Right ventricle myocardium superior (tissue), 1 donor: ENCODE measurements at regions of chr6 and their contacts with region 1.

Region 1: DNA sequence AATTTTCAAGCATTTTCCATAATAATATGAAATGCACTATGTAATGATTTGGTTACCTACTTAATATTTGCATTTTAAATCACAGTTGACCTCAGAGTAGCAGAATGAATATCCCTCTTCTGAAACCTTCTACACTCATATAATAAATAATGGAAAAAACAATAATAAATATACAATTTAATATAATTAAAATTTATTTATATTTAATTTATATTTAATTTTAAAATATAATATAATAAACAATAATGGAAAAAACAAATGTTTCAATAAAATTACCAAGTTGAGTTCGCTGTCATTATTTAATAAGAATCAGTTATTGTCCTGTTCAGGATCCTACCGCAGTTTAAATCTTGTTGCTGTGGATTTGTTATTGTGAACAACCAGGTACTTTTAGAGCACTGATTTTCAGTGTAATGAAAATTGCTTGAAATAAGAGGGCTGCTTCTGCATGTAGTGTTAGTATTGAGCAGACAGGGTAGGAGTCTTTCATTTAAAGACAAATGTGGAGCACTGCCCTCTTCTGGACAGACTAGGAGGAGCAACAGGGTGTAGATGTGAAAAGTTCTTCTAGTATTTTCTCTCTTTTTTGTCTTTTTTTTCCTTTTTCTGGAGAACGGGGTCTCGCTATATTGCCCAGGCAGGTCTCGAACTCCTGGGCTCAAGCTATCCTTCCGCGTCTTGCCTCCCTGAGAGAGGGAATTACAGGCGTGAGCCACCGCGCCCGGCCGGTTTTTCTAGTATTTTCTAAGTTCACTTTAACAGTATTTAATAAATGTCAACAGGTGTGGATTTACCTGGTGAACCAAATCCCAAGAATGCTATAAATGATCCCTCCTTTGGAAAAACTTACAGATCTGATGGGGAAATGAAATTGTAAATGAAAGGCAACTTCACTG is 13.6 kb downstream of the TRAPPC3L start:
- DNase-seq: peak; percentile 37
- ATAC-seq: peak; percentile 89

Region 2: DNA sequence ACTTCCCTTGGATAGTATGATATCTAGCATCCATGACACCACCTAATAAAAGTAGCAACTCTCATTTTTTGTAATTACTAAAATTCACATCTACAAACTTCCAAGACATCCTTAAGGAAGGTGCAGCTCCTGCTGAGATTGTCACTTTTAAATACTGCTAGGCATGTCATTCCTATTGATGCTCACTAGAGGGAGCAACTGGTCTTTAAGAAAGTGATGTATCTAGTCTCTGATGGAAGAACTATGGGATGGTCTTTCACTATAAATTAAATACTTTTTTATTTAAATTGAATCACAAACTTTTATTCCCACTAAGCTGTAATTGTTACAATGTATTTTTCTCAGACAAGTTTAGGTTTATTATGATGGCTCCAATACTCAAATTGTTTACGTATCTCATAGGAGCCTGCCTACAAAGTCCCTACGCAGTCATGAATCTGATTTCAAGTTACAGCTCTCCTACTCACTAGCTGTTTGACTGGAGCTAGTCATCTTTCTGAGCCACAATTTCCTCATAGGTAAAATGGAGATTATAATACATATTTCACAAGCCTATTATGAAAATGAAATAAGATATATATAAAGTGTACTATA is 244.1 kb before region 1 on chr6:
- intact Hi-C with region 1: loop called (anchors 5 kb)
- DNase-seq: no peak
- ATAC-seq: peak; percentile 81

Region 3: DNA sequence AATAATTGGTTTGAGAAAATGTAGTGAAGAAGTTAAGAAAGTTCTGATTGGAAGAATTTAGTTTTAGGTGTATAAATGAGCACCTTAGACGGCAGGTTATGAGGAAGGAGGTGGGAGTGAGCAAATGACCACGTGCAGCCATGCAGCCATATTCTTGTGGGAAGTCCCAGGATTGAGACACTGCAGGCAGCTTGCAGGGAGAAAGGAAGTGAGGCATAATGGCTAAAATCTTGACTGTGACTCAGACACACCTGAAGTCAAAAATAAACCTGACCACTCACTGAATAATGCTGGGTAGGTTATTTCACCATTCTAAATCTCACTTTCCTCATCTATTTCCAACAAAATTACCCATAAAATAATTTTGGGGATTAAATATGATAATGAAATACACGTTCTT is 144.5 kb before region 1 on chr6:
- intact Hi-C with region 1: no loop called
- DNase-seq: no peak
- ATAC-seq: no peak

Region 4: GRCh38 chr6:116444092-116444491 is 87.8 kb before region 1 on chr6:
- intact Hi-C with region 1: loop called (anchors 5 kb)
- DNase-seq: no peak
- ATAC-seq: peak; percentile 78